Naive thymus-derived CD4-positive, alpha-beta T cell (primary cell): ENCODE measurements at regions of chr4 and their contacts with region 1.

Region 1: DNA sequence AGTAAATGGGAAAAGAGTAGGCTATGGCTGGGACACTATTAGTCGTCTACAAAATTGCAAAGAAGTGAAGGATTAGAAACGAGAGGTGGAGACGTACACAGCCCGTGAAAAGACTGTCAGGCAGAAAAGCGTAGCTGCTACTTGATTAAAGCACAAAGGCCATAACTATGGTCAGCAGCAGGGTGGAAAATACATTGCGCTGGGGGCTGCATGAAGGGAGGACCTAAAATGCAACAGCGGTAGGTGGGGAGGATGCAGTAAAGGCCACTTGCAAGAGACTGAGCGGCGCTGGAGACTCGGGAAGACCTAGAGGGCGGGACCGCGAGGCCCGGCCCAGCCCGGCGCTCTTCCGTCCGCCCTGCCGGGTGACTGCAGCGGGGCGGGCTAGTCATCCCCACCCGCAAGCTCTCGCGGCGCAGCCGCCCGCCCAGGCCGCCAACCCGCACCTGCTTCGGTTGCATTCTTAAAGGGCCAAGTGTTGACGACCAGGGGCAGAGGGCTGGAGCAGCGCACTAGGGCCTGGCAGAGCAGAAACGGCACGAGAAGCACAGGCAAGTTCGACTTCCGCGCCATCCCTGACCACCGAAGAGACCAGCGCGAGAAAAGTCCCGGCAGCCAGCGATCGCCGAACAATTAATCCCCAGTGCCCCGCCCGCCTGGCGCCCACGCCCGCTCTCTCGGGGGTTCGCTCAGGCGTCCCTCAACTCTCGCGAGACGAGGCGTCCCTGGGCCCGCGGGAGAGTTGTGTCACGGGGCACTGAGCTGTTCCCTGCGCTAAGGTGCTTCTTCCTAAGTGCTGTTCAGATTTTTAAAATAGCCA is at the start of gene AGA:
- DNase-seq: peak; percentile 92 to 96 (median 95)
- ATAC-seq: peak; percentile 95
- H3K4me3 ChIP-seq: peak within 1 kb of the TSS; percentile 91
- H3K4me3 Mint-ChIP-seq: peak within 1 kb of the TSS; percentile 85 to 96 (median 91)
- H3K27ac ChIP-seq: peak within 1 kb of the TSS; percentile 83
- H3K27ac Mint-ChIP-seq: peak within 1 kb of the TSS; percentile 90 to 100 (median 94)
- H3K4me1 ChIP-seq: peaks cover 12 to 13% of the 10 kb centered on the region in 2 donors
- H3K4me1 Mint-ChIP-seq: peaks cover 17 to 44% (median 33%) of the 10 kb centered on the region in 7 donors
- H3K27me3 ChIP-seq: no peaks in the 10 kb centered on the region
- H3K27me3 Mint-ChIP-seq: no peaks in the 10 kb centered on the region
- total RNA-seq, gene AGA: 20.4 to 28.4 (median 24.0) TPM

Region 2: GRCh38 chr4:176195184-176195978 is 1246.6 kb before region 1 on chr4 and contains the start of gene SPATA4:
- CTCF ChIA-PET with region 1: no interaction called
- POLR2A ChIA-PET with region 1: no interaction called
- intact Hi-C with region 1: loop called in 1 of 2 experiments (anchors 1 kb)
- DNase-seq: peak; percentile 85 to 92 (median 91)
- ATAC-seq: peak; percentile 99
- H3K4me3 ChIP-seq: peak within 1 kb of the TSS; percentile 83
- H3K4me3 Mint-ChIP-seq: peak within 1 kb of the TSS; percentile 83 to 94 (median 90)
- H3K27ac ChIP-seq: peak within 1 kb of the TSS; percentile 65
- H3K27ac Mint-ChIP-seq: peak within 1 kb of the TSS; percentile 75 to 96 (median 93)
- H3K4me1 ChIP-seq: peaks cover 5 to 9% of the 10 kb centered on the region in 2 donors
- H3K4me1 Mint-ChIP-seq: peaks cover 3 to 12% (median 10%) of the 10 kb centered on the region in 7 donors
- H3K27me3 ChIP-seq: peaks cover 0 to 12% of the 10 kb centered on the region in 2 donors
- H3K27me3 Mint-ChIP-seq: peaks cover 4 to 43% (median 16%) of the 10 kb centered on the region in 5 donors
- total RNA-seq, gene SPATA4: not detected

Region 3: GRCh38 chr4:176902710-176903323 is 539.2 kb before region 1 on chr4:
- CTCF ChIA-PET with region 1: no interaction called
- POLR2A ChIA-PET with region 1: no interaction called
- intact Hi-C with region 1: loop called in 1 of 2 experiments (anchors 5 kb)
- DNase-seq: no peak
- ATAC-seq: no peak
- H3K4me3 ChIP-seq: no peak overlapping the region
- H3K4me3 Mint-ChIP-seq: peak overlapping the region in 1 of 10 donors; percentile 45
- H3K27ac ChIP-seq: no peak overlapping the region
- H3K27ac Mint-ChIP-seq: peak overlapping the region in 1 of 9 donors; percentile 31
- H3K4me1 ChIP-seq: no peaks in the 10 kb centered on the region
- H3K4me1 Mint-ChIP-seq: peaks cover 0 to 17% (median 0%) of the 10 kb centered on the region in 7 donors
- H3K27me3 ChIP-seq: no peaks in the 10 kb centered on the region
- H3K27me3 Mint-ChIP-seq: peaks cover 0 to 6% (median 0%) of the 10 kb centered on the region in 5 donors

Region 4: GRCh38 chr4:177309522-177310371 is 132.3 kb before region 1 on chr4 and contains the start of gene NEIL3:
- CTCF ChIA-PET with region 1: no interaction called
- POLR2A ChIA-PET with region 1: interaction called, 6 read pairs
- intact Hi-C with region 1: loop called (anchors 1 kb)
- DNase-seq: peak; percentile 85 to 92 (median 90)
- ATAC-seq: peak; percentile 94
- H3K4me3 ChIP-seq: peak within 1 kb of the TSS; percentile 78
- H3K4me3 Mint-ChIP-seq: peak within 1 kb of the TSS; percentile 81 to 95 (median 89)
- H3K27ac ChIP-seq: peak within 1 kb of the TSS; percentile 69
- H3K27ac Mint-ChIP-seq: peak within 1 kb of the TSS; percentile 25 to 93 (median 82)
- H3K4me1 ChIP-seq: peaks cover 0 to 13% of the 10 kb centered on the region in 2 donors
- H3K4me1 Mint-ChIP-seq: peaks cover 4 to 56% (median 20%) of the 10 kb centered on the region in 7 donors
- H3K27me3 ChIP-seq: no peaks in the 10 kb centered on the region
- H3K27me3 Mint-ChIP-seq: no peaks in the 10 kb centered on the region
- total RNA-seq, gene NEIL3: 0.37 to 24.7 (median 2.4) TPM in 3 of 5 experiments, not detected in the others

Region 5: GRCh38 chr4:177393236-177393635 is 48.8 kb before region 1 on chr4:
- CTCF ChIA-PET with region 1: interaction called, 6 read pairs
- POLR2A ChIA-PET with region 1: interaction called, 72 read pairs
- intact Hi-C with region 1: loop called (anchors 1 to 2 kb)
- DNase-seq: peak in 7 of 9 donors; percentile 23 to 64 (median 55)
- ATAC-seq: peak; percentile 86
- H3K4me3 ChIP-seq: no peak overlapping the region
- H3K4me3 Mint-ChIP-seq: peak overlapping the region in 9 of 10 donors; percentile 53 to 85 (median 66)
- H3K27ac ChIP-seq: peak overlapping the region; percentile 22
- H3K27ac Mint-ChIP-seq: peak overlapping the region; percentile 16 to 98 (median 86)
- H3K4me1 ChIP-seq: peaks cover 0 to 16% of the 10 kb centered on the region in 2 donors
- H3K4me1 Mint-ChIP-seq: peaks cover 12 to 45% (median 32%) of the 10 kb centered on the region in 7 donors
- H3K27me3 ChIP-seq: no peaks in the 10 kb centered on the region
- H3K27me3 Mint-ChIP-seq: peaks cover 0 to 16% (median 0%) of the 10 kb centered on the region in 5 donors

Region 6: DNA sequence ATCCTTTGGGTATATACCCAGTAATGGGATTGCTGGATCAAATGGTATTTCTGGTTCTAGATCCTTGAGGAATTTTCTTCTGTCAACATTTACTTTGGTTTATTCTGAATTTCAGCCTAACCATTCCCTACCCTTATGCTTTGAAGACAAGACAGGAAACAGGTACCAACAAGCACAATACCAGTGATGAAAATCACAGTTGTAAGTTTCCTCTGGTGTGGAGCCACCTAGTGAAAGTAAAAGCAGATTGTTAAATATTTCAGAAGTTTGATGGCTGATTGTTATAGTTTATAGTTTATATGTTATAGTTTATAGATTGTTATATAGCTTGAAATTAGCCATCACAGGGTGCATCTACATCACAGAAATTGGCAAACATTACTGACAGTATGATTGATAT is 104.7 kb after region 1 on chr4:
- CTCF ChIA-PET with region 1: no interaction called
- POLR2A ChIA-PET with region 1: no interaction called
- intact Hi-C with region 1: loop called in 1 of 2 experiments (anchors 5 kb)
- DNase-seq: peak in 3 of 9 donors; percentile 16 to 37 (median 24)
- ATAC-seq: no peak
- H3K4me3 ChIP-seq: no peak overlapping the region
- H3K4me3 Mint-ChIP-seq: no peak overlapping the region
- H3K27ac ChIP-seq: no peak overlapping the region
- H3K27ac Mint-ChIP-seq: no peak overlapping the region
- H3K4me1 ChIP-seq: no peaks in the 10 kb centered on the region
- H3K4me1 Mint-ChIP-seq: no peaks in the 10 kb centered on the region
- H3K27me3 ChIP-seq: no peaks in the 10 kb centered on the region
- H3K27me3 Mint-ChIP-seq: no peaks in the 10 kb centered on the region